Mammary epithelial cell (primary cell): ENCODE measurements at regions of chrX and their contacts with region 1.

Region 1: DNA sequence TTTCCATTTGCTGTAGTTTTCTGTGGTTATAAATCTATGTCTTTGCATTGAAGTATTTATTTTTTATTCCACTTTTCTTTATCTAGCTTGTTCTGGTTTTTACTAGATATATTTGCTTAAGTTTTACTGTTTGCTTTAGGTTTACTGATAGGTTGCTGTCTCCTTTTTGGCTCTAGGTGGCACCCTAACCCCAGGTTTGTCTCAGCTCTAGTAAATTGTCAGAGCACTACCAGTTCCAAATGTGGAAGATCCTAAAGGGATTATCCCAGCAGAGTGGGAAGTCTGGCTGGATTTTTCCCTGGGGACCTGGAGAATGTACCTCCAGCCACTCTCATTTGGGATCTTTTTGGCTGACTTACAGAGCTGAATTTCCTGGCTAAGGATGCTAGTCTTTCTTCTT is 106.1 kb downstream of the PBDC1 start:
- DNase-seq: peak; percentile 29
- H3K4me3 ChIP-seq: no peak overlapping the region
- H3K27ac ChIP-seq: no peak overlapping the region
- H3K4me1 ChIP-seq: no peaks in the 10 kb centered on the region
- H3K27me3 ChIP-seq: no peaks in the 10 kb centered on the region
- CTCF ChIP-seq: peak; percentile 61 to 81

Region 2: GRCh38 chrX:76454456-76454927 is 175.5 kb after region 1 on chrX:
- CTCF ChIA-PET with region 1: interaction called, 5 read pairs
- dilution Hi-C with region 1: no loop called
- in situ Hi-C with region 1: no loop called
- intact Hi-C with region 1: loop called (anchors 1 kb)
- DNase-seq: peak; percentile 23
- H3K4me3 ChIP-seq: no peak overlapping the region
- H3K27ac ChIP-seq: no peak overlapping the region
- H3K4me1 ChIP-seq: no peaks in the 10 kb centered on the region
- H3K27me3 ChIP-seq: no peaks in the 10 kb centered on the region
- CTCF ChIP-seq: peak; percentile 48 to 71

Region 3: GRCh38 chrX:78029663-78030062 is 1750.7 kb after region 1 on chrX:
- CTCF ChIA-PET with region 1: no interaction called
- dilution Hi-C with region 1: no loop called
- in situ Hi-C with region 1: loop called in 1 of 2 experiments (anchors 25 kb)
- intact Hi-C with region 1: loop called (anchors 2 kb)
- DNase-seq: peak; percentile 21
- H3K4me3 ChIP-seq: no peak overlapping the region
- H3K27ac ChIP-seq: no peak overlapping the region
- H3K4me1 ChIP-seq: no peaks in the 10 kb centered on the region
- H3K27me3 ChIP-seq: no peaks in the 10 kb centered on the region
- CTCF ChIP-seq: peak; percentile 61 to 65